Activated CD4-positive, alpha-beta T cell treated with anti-CD3 and anti-CD28 coated beads for 36 hours (primary cell): ENCODE measurements at regions of chr6 and their contacts with region 1.

Region 1: DNA sequence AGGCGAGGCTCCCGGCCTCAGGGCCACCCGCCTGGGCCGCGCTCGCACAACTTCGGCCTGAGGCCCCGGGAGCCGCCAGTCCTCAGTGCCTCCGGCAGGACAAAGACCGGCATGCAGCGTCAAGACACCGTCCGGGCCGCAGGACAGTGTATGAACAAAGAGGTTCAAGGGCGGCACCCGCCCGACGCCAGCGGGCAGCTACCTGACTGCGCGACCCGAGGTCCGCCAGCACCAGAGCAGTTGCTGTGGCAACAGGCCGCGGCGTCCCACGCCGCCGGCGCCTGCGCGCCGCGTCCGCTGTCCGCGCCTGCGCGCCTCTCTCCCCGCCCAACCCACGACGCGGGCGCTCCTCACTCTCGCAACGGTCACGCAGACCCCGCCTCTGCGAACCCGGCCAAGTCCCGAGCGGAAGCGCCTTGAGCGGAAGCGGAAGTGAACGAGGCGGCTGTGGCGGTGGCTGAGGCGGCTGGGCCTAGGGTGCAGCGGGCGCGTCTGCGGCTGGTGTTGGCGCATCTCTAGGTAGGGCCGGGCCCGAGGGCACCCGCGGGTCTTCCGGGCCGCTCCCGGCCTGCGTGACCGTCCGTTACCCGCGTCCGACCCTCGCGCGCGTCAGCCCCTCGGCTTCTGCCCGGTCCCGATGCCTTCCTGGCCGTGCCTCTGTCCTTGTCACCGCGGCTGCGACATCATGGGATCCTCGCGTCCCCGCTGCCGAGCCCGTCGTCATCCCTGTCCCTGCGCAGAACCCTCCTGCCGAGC is at the start of gene FAM120B:
- DNase-seq: peak; percentile 96
- ATAC-seq: peak; percentile 97
- H3K4me3 Mint-ChIP-seq: peak within 1 kb of the TSS; percentile 100
- H3K27ac Mint-ChIP-seq: peak within 1 kb of the TSS; percentile 98
- H3K4me1 Mint-ChIP-seq: peaks cover 40% of the 10 kb centered on the region
- H3K27me3 Mint-ChIP-seq: peaks cover 14% of the 10 kb centered on the region
- total RNA-seq, gene FAM120B: 21.9 to 26.3 TPM

Region 2: GRCh38 chr6:169751242-169752073 is 555.0 kb before region 1 on chr6 and contains the starts of genes DYNLT2 and ERMARD:
- CTCF ChIA-PET with region 1: no interaction called
- POLR2A ChIA-PET with region 1: no interaction called
- intact Hi-C with region 1: loop called in 1 of 2 experiments (anchors 2 kb)
- DNase-seq: peak; percentile 96
- ATAC-seq: peak; percentile 96
- H3K4me3 Mint-ChIP-seq: peak within 1 kb of the TSS; percentile 95
- H3K27ac Mint-ChIP-seq: peak within 1 kb of the TSS; percentile 97
- H3K4me1 Mint-ChIP-seq: peaks cover 23% of the 10 kb centered on the region
- H3K27me3 Mint-ChIP-seq: no peaks in the 10 kb centered on the region
- total RNA-seq, gene DYNLT2: 2.0 to 2.4 TPM
- total RNA-seq, gene ERMARD: 19.2 to 30.2 TPM

Region 3: GRCh38 chr6:170178561-170179477 is 127.7 kb before region 1 on chr6:
- CTCF ChIA-PET with region 1: no interaction called
- POLR2A ChIA-PET with region 1: no interaction called
- intact Hi-C with region 1: no loop called
- DNase-seq: no peak
- ATAC-seq: no peak
- H3K4me3 Mint-ChIP-seq: no peak overlapping the region
- H3K27ac Mint-ChIP-seq: no peak overlapping the region
- H3K4me1 Mint-ChIP-seq: no peaks in the 10 kb centered on the region
- H3K27me3 Mint-ChIP-seq: no peaks in the 10 kb centered on the region

Region 4: DNA sequence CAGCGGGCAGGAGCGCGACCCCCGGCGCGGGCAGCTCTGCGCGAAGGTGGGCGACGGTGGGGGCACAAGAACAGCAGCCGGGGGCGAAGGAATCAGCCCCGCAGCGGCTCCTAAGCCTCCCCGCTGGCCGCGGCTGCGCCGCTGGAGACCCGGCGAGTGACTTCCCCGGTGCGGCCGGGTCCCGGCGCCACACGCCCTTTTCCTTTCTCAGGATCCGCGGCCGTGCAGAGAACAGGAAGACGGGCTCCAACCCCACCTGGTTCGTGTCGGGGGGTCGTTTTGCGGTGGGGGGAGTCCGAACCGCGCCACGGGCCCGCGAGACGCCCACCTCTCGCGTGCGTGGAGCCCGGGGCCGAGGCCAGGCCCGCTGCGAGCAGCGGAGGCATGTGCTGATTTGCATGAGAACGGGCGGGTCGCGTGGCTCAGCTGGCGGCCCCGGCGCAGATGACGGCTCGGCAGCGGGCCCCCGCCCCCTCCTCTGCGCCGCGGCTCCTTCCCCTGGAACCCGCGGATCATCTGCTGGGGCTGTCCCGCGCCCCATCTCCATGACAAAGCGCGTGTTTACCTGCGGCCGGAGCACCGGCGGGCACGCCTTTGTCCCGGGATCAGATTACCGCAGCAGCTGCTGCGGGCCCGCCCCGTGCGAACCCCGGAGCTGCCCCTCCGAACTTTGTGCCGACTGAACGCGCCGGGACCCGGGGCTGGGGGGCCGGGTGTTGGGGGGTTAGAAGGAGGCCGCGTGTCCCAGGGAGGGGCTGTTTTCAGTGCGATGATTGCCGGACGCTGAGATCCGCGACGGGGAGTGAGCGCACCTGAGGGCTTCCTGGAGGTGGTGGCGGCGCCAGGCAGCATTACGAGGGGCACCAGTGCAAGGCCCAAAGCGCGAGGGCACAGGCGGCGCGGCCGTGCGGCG is 10.7 kb before region 1 on chr6:
- CTCF ChIA-PET with region 1: interaction called, 9 read pairs
- POLR2A ChIA-PET with region 1: interaction called, 3 read pairs
- intact Hi-C with region 1: loop called (anchors 1 to 2 kb)
- DNase-seq: peak; percentile 80
- ATAC-seq: peak; percentile 67
- H3K4me3 Mint-ChIP-seq: peak overlapping the region; percentile 52
- H3K27ac Mint-ChIP-seq: no peak overlapping the region
- H3K4me1 Mint-ChIP-seq: peaks cover 29% of the 10 kb centered on the region
- H3K27me3 Mint-ChIP-seq: peaks cover 61% of the 10 kb centered on the region

Region 5: GRCh38 chr6:170329321-170329720 is 22.8 kb after region 1 on chr6:
- CTCF ChIA-PET with region 1: no interaction called
- POLR2A ChIA-PET with region 1: no interaction called
- intact Hi-C with region 1: no loop called
- DNase-seq: no peak
- ATAC-seq: no peak
- H3K4me3 Mint-ChIP-seq: no peak overlapping the region
- H3K27ac Mint-ChIP-seq: peak overlapping the region; percentile 11
- H3K4me1 Mint-ChIP-seq: peaks cover 15% of the 10 kb centered on the region
- H3K27me3 Mint-ChIP-seq: no peaks in the 10 kb centered on the region

Region 6: GRCh38 chr6:170371588-170371987 is 65.1 kb after region 1 on chr6:
- CTCF ChIA-PET with region 1: no interaction called
- POLR2A ChIA-PET with region 1: no interaction called
- intact Hi-C with region 1: loop called in 1 of 2 experiments (anchors 2 kb)
- DNase-seq: no peak
- ATAC-seq: no peak
- H3K4me3 Mint-ChIP-seq: no peak overlapping the region
- H3K27ac Mint-ChIP-seq: peak overlapping the region; percentile 62
- H3K4me1 Mint-ChIP-seq: peaks cover 12% of the 10 kb centered on the region
- H3K27me3 Mint-ChIP-seq: no peaks in the 10 kb centered on the region

Region 7: GRCh38 chr6:170542031-170542719 is 235.7 kb after region 1 on chr6:
- CTCF ChIA-PET with region 1: no interaction called
- POLR2A ChIA-PET with region 1: no interaction called
- intact Hi-C with region 1: no loop called
- DNase-seq: no peak
- ATAC-seq: no peak
- H3K4me3 Mint-ChIP-seq: no peak overlapping the region
- H3K27ac Mint-ChIP-seq: peak overlapping the region; percentile 8
- H3K4me1 Mint-ChIP-seq: peaks cover 21% of the 10 kb centered on the region
- H3K27me3 Mint-ChIP-seq: no peaks in the 10 kb centered on the region

Region 8: DNA sequence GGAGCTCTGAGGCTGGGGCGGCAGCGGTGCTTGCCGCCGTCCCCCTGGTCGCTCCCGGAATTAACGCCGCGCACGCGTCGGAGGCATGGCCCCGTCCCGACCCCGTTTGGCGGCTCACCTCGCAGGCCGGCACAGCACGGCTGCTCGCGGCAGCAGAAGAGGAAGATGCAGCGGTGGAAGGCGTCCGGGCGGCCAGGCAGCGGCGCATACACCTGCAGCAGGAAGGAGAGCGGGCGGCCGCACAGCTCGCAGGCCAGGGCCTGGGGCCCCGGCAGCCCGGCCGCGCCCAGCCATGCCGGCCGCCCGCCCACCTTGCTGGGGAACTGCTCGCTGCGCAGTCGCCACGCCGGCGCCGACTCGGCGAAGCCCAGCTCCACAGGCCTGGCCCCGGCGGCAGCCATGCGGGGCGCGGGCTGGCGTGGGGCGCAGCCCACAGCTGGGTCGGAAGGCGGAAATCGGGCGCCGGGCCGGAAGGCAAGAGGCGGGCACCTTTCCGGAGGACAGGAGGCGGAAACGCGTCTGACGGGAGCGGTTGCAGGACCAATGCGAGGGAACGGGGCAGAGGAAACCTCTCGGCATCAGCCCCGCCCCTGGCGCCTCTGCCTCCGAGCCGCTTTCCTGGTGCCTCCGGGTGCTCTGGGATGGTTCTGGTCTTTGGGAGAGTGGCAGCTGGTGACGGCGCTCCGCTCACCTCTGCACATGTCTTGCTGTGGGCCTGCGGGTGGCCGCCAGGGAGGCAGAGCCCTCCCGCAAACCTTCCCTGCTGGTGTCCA is 277.9 kb after region 1 on chr6 and contains the start of gene PDCD2:
- CTCF ChIA-PET with region 1: no interaction called
- POLR2A ChIA-PET with region 1: no interaction called
- intact Hi-C with region 1: loop called (anchors 1 kb)
- DNase-seq: peak; percentile 96
- ATAC-seq: peak; percentile 96
- H3K4me3 Mint-ChIP-seq: peak within 1 kb of the TSS; percentile 91
- H3K27ac Mint-ChIP-seq: peak within 1 kb of the TSS; percentile 95
- H3K4me1 Mint-ChIP-seq: peaks cover 30% of the 10 kb centered on the region
- H3K27me3 Mint-ChIP-seq: no peaks in the 10 kb centered on the region
- total RNA-seq, gene PDCD2: 133 to 152 TPM